Aorta (tissue), 5 donors: ENCODE measurements at regions of chr11 and their contacts with region 1.

Region 1: GRCh38 chr11:118560806-118561205 is 4.9 kb downstream of the IFT46 start:
- DNase-seq: no peak
- ATAC-seq: no peak
- H3K4me3 ChIP-seq: no peak overlapping the region
- H3K27ac ChIP-seq: no peak overlapping the region
- H3K4me1 ChIP-seq: peaks cover 0 to 3% of the 10 kb centered on the region in 2 donors
- H3K27me3 ChIP-seq: no peaks in the 10 kb centered on the region

Region 2: GRCh38 chr11:118529584-118530407 is 31.0 kb before region 1 on chr11:
- intact Hi-C with region 1: loop called in 1 of 2 experiments (anchors 5 kb)
- DNase-seq: no peak
- ATAC-seq: no peak
- H3K4me3 ChIP-seq: peak overlapping the region; percentile 46 to 69
- H3K27ac ChIP-seq: peak overlapping the region in 1 of 2 donors; percentile 72
- H3K4me1 ChIP-seq: no peaks in the 10 kb centered on the region
- H3K27me3 ChIP-seq: no peaks in the 10 kb centered on the region

Region 3: GRCh38 chr11:118652681-118653181 is 91.9 kb after region 1 on chr11:
- intact Hi-C with region 1: no loop called
- DNase-seq: peak in 1 of 2 donors; percentile 37
- ATAC-seq: no peak
- H3K4me3 ChIP-seq: no peak overlapping the region
- H3K27ac ChIP-seq: no peak overlapping the region
- H3K4me1 ChIP-seq: no peaks in the 10 kb centered on the region
- H3K27me3 ChIP-seq: no peaks in the 10 kb centered on the region

Region 4: DNA sequence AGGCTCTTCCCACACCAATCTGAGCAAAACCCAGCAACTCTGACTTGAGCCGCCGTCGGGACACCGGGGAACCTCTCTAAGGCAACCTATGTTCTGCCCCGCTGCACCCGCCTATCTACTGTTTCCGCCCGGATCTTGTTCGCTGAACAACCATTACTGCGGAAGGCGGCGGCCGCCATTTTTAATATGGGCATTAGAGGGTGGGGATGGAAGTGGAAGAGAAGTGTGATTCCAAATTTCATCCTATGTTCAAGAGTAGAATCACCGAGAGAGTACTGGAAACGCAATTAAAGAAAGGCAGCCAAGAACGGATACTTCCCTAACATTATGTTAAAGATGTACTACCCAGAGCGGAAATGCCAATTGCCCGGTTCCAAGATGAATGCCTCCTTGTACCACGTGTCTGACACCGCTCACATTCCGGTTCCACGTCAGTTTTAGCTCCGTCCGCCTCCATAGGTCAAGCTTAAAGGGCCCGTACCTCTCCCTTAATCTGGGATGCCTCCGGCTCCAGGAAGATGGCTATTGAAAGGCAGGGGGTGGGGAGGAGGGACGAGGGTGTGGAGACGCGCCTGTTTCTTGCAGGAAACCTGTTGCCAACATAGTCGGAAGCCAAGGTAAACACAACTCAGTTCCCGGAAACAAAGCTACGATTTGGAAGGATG is 541.1 kb after region 1 on chr11 and contains the start of gene DPAGT1:
- intact Hi-C with region 1: no loop called
- DNase-seq: peak; percentile 93 to 94
- ATAC-seq: peak; percentile 97
- H3K4me3 ChIP-seq: peak within 1 kb of the TSS; percentile 43 to 70
- H3K27ac ChIP-seq: peak within 1 kb of the TSS; percentile 29 to 95
- H3K4me1 ChIP-seq: no peaks in the 10 kb centered on the region
- H3K27me3 ChIP-seq: no peaks in the 10 kb centered on the region
- total RNA-seq, gene DPAGT1: 23.6 to 41.8 TPM